ENCODE measurements at regions of chr17 and their contacts with region 1.

Region 1: DNA sequence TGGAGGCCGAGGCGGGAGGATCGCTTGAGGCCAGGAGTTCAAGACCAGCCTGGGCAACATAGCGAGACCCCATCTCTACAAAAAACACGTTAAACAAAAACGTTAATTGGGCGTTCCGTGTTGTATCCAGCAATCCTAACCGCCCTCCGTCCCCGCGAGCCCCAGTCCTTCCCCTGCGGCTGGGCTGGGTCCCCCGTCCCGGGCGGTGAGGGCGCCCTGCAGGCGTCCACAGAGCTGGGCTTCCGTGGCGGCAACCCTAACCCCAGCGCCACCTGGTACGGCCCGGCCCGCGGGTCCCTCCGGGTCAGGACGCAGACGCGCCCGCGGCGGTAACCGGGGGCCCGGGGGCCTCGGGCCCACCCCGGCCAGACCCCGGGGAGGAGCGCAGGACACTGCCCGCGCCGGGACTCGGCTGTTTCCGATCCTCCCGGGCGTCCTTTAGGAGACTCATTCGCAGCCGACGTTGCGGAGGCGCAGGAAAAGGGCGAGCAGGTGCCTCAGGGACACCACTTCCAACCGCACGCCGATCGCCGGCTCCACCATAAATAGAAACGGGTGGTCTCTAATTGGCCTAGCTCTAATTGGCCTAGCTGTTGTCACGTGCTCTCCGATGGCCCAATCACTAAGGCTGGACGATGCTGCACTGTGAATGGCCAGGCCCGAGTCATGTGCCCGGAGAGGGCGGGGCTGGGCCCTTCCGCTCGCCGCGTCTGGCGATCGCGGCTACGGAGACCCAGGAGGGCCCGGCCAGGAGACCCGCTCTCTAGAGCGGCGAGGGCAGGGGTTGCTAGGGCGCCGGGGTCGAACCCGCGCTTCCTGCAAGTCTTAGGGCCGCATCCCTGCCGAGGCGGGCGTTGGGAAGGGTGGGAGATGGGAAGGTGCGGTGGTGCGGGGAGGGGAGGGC is 19.0 kb upstream of the CSNK1D start:
- DNase-seq: peak; percentile 92 to 98 (median 96)
- H3K4me3 ChIP-seq: peak overlapping the region; percentile 65 to 100 (median 93)
- H3K27ac ChIP-seq: peak overlapping the region; percentile 84 to 99 (median 95)
- H3K27me3 ChIP-seq: no peaks in the 10 kb centered on the region
- CTCF ChIP-seq: peak in 3 of 56 donors; percentile 6 to 17 (median 13)

Region 2: DNA sequence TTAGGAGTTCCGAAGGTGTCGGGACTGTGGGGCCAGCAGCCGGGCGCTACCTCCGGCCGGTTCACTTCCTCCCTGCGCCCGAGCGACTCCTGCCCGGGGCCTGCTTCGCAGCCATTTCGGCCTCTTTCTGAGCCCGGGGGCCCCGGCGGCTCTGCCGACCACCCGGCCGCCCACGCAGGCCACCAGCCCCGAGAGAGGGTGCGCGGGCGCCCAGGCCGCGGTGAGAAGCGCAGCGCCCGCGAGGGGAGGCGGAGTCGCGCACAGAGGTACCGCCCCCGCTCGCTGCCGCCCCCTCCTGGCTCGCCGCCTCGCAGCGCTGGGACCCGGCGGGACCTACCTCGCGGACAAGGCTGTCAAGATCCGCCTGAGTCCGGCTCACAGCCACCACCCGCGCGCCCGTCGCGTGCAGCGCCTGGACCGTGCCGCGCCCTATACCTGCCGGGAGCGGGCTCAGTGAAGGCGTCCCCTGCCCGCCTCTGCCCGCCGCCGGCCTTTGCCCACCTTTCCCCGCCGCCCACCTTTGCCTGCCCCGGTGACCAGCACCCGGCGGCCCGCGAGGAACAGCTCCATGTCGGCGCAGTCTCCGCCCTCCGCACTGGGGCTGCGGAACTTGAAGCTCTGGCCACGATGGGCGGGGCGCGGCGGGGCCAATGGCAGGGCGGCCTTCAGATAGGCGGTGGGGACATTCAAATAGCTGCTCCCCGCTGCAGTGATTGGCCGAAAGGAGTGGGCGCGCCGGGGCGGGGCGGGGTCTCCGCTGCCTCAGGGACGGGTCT is 255.2 kb before region 1 on chr17 and contains the start of gene DCXR:
- intact Hi-C with region 1: loop called in 1 of 2 experiments (anchors 10 kb)
- DNase-seq: peak; percentile 97 to 99 (median 98)
- H3K4me3 ChIP-seq: peak within 1 kb of the TSS; percentile 51 to 97 (median 82)
- H3K27ac ChIP-seq: peak within 1 kb of the TSS; percentile 52 to 99 (median 94)
- H3K27me3 ChIP-seq: no peaks in the 10 kb centered on the region
- CTCF ChIP-seq: peak; percentile 17 to 87 (median 67)
- total RNA-seq, gene DCXR: 80.1 to 213 (median 127) TPM

Region 3: DNA sequence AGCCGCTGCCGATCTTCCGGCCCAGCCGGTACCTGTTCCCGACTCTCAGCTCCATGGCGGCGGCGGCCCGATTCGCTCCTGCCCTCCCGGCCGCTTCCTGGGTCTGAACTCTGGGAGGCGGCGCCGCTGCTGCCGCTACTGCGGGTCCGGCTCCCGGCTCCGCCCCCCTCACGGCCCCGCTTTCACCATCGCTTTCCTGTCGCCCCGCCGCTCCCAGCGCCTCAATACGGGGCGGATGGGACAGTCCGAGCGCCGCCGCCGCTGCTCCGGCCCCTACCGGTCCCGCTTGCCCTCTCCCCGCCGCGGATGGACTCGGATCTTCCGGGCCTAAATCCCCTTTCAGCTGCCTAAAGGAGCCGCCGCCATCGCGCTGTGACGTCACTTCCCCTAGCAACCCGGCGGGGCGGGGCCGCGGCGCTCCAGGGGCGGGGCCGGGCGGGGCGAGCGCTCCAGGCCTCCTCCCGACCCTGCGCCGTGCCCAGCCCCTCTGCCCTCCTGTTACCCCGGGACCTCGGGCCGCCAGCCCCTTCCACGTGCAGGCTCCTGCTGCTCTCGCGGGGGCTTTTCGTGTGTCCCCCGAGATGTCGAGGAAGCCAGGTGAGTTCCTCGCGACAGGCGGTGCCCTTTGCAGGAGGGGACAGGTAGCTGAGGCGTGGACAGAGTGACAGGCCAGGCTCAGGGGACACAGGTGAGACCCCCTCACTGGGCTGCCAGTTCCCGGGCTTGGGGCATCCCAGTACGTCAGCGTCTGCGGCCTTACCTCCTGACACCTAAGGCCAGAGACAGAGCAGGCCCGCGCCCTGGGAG is 19.0 kb before region 1 on chr17 and contains the start of gene CSNK1D:
- intact Hi-C with region 1: loop called (anchors 2 kb)
- DNase-seq: peak; percentile 80 to 94 (median 90)
- H3K4me3 ChIP-seq: peak within 1 kb of the TSS; percentile 71 to 98 (median 93)
- H3K27ac ChIP-seq: peak within 1 kb of the TSS; percentile 75 to 100 (median 97)
- H3K27me3 ChIP-seq: no peaks in the 10 kb centered on the region
- CTCF ChIP-seq: peak in 10 of 56 donors; percentile 13 to 38 (median 22)
- total RNA-seq, gene CSNK1D: 96.2 to 160 (median 125) TPM

Region 4: GRCh38 chr17:83051395-83052233 is 759.1 kb after region 1 on chr17:
- intact Hi-C with region 1: loop called in 1 of 2 experiments (anchors 5 kb)
- DNase-seq: peak; percentile 91 to 99 (median 96)
- H3K4me3 ChIP-seq: peak overlapping the region; percentile 58 to 95 (median 87)
- H3K27ac ChIP-seq: peak overlapping the region in 57 of 59 donors; percentile 28 to 92 (median 81)
- H3K27me3 ChIP-seq: no peaks in the 10 kb centered on the region
- CTCF ChIP-seq: peak in 21 of 56 donors; percentile 5 to 50 (median 18)

Measured in dorsolateral prefrontal cortex (tissue), 120 donors.